ENCODE measurements at regions of chr21 and their contacts with region 1.

Region 1: GRCh38 chr21:38712071-38712470 is 93.7 kb upstream of the ETS2 start:
- DNase-seq: no peak
- H3K4me3 ChIP-seq: no peak overlapping the region
- H3K27ac ChIP-seq: no peak overlapping the region
- H3K4me1 ChIP-seq: no peaks in the 10 kb centered on the region
- H3K27me3 ChIP-seq: no peaks in the 10 kb centered on the region
- CTCF ChIP-seq: no peak

Region 2: GRCh38 chr21:38511662-38512243 is 200.3 kb before region 1 on chr21:
- CTCF ChIA-PET with region 1: no interaction called
- POLR2A ChIA-PET with region 1: no interaction called
- intact Hi-C with region 1: loop called (anchors 10 kb)
- DNase-seq: no peak
- H3K4me3 ChIP-seq: no peak overlapping the region
- H3K27ac ChIP-seq: no peak overlapping the region
- H3K4me1 ChIP-seq: no peaks in the 10 kb centered on the region
- H3K27me3 ChIP-seq: no peaks in the 10 kb centered on the region
- CTCF ChIP-seq: no peak